HEK293 (cell line): ENCODE measurements at regions of chr1 and their contacts with region 1.

Region 1: DNA sequence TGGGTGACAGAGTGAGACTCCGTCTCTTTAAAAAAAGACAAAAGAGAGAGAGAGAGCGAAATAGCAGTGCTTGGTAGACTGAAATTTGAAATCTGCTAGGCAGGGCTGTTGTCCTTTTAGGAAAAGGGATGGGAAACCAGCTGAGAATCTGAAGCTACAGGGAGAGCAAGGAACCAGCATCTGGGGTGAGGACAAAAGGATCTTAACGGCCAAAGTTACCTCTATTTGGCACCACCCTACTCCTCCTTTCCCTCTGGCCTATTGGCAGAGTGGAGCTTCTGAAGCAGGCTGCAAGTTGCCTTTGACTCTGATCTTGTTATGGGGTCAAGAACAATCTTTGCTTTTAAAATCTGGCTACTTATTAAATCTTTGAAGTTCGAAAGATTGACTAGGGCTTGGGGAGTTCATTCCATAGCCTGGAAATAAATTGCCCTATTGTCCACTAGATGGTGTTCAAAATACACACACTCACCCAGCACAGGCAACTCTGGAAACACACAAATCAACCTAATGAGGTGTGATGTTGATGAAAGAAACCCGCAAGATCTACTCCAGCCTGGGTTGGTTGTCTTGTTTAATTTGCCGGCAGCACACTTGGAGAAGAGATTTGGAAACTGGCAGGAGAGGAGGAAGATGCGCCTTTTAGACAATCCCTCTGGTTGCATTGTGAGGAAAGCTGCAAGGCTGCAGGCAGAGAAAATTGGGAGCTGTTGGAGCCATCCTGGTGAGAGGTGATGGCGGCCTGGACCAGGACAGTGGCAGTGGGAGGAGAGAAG is 16.5 kb upstream of the PARP1 start:
- H3K4me3 ChIP-seq: no peak overlapping the region
- H3K27ac ChIP-seq: no peak overlapping the region
- H3K4me1 ChIP-seq: peaks cover 3% of the 10 kb centered on the region
- CTCF ChIP-seq: peak; percentile 88

Region 2: GRCh38 chr1:226407497-226408284 is 16.7 kb before region 1 on chr1 and contains the start of gene PARP1:
- CTCF ChIA-PET with region 1: interaction called, 125 read pairs
- POLR2A ChIA-PET with region 1: interaction called, 8 read pairs
- H3K4me3 ChIP-seq: peak within 1 kb of the TSS; percentile 71
- H3K27ac ChIP-seq: peak within 1 kb of the TSS; percentile 95
- H3K4me1 ChIP-seq: peaks cover 23% of the 10 kb centered on the region
- CTCF ChIP-seq: peak; percentile 74

Region 3: DNA sequence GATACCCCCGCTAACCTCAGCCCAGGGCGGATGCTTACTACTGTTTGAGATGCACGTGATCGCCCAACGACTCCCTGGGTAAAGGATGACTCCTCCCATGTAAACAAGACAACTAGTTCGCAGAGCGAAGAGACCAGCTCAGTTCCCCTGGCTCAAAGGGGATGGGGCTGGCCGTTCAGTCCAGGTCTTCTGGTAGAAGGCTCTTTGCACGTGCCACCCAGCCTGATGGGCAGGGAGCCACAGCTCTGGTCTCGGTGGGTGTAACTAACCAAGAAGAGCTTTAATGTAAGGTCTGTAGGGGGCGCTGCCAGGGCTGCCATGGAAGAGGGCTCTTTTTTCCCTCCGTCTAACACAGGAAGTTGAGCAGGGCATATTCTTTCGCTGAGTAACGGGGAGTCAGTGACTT is 32.9 kb after region 1 on chr1:
- CTCF ChIA-PET with region 1: interaction called, 13 read pairs
- POLR2A ChIA-PET with region 1: no interaction called
- H3K4me3 ChIP-seq: no peak overlapping the region
- H3K27ac ChIP-seq: no peak overlapping the region
- H3K4me1 ChIP-seq: no peaks in the 10 kb centered on the region
- CTCF ChIP-seq: no peak

Region 4: DNA sequence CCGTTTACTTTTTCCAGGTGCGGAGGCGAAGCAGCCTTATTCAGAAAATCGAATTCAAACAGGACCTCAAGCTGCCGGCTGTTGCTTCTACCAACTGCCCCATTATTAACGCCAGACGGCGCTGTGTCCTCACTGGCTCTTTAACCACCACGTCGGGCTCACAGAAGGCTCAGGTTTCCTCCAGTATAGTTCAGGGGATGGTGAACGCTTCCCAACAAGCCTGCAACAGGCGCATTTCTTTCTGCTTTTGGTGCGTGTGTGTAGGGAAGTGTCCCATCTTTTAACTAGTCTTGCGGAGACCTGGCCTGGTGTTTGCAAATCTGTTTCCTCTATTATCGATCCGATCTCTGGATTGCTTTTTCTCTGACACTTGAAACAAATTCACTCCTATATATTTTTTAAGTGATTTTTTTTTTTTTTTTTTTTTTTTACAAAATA is 123.4 kb after region 1 on chr1:
- CTCF ChIA-PET with region 1: interaction called, 46 read pairs
- POLR2A ChIA-PET with region 1: interaction called, 4 read pairs
- H3K4me3 ChIP-seq: no peak overlapping the region
- H3K27ac ChIP-seq: no peak overlapping the region
- H3K4me1 ChIP-seq: peaks cover 27% of the 10 kb centered on the region
- CTCF ChIP-seq: peak; percentile 97

Region 5: GRCh38 chr1:226589008-226589733 is 164.8 kb after region 1 on chr1:
- CTCF ChIA-PET with region 1: interaction called, 10 read pairs
- POLR2A ChIA-PET with region 1: no interaction called
- H3K4me3 ChIP-seq: no peak overlapping the region
- H3K27ac ChIP-seq: no peak overlapping the region
- H3K4me1 ChIP-seq: no peaks in the 10 kb centered on the region
- CTCF ChIP-seq: no peak

Region 6: DNA sequence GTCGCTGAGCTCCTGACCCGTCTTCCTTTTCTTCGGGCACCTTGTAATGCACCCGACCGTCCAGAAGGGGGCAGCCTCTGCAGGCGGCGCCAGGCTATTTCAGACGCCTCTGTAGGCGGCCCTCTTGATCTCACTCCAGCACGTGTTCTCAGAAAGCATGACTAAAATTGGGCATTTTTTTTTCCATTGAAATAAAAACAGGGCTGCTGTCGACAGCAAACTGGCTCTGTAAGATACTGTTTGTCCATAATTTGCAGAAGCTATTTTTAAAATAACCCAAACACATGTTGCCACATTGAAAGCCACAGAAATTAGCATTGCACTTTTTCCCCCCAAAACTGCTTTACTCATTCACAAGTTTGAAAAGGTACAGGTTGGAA is 202.2 kb after region 1 on chr1:
- CTCF ChIA-PET with region 1: interaction called, 16 read pairs
- POLR2A ChIA-PET with region 1: no interaction called
- H3K4me3 ChIP-seq: no peak overlapping the region
- H3K27ac ChIP-seq: no peak overlapping the region
- H3K4me1 ChIP-seq: no peaks in the 10 kb centered on the region
- CTCF ChIP-seq: peak; percentile 86

Region 7: GRCh38 chr1:227299241-227299627 is 874.8 kb after region 1 on chr1:
- CTCF ChIA-PET with region 1: no interaction called
- POLR2A ChIA-PET with region 1: no interaction called
- H3K4me3 ChIP-seq: no peak overlapping the region; the same call in 1 of the 2 replicates
- H3K27ac ChIP-seq: no peak overlapping the region
- H3K4me1 ChIP-seq: peaks cover 13% of the 10 kb centered on the region
- CTCF ChIP-seq: no peak